ENCODE measurements at regions of chr3 and their contacts with region 1.

Region 1: GRCh38 chr3:34683851-34684250 is 885.4 kb downstream of the PDCD6IP start:
- DNase-seq: peak; percentile 15
- ATAC-seq: peak; percentile 71; the same call in 1 of the 2 replicates
- H3K4me3 ChIP-seq: no peak overlapping the region
- H3K27ac ChIP-seq: no peak overlapping the region
- H3K4me1 ChIP-seq: no peaks in the 10 kb centered on the region
- H3K27me3 ChIP-seq: no peaks in the 10 kb centered on the region
- CTCF ChIP-seq: peak; percentile 69

Region 2: GRCh38 chr3:33883538-33883950 is 800.3 kb before region 1 on chr3:
- CTCF ChIA-PET with region 1: interaction called, 15 read pairs
- POLR2A ChIA-PET with region 1: no interaction called
- in situ Hi-C with region 1: no loop called
- intact Hi-C with region 1: loop called (anchors 2 kb)
- DNase-seq: peak; percentile 17
- ATAC-seq: peak; percentile 36; the same call in 1 of the 2 replicates
- H3K4me3 ChIP-seq: peak overlapping the region in 1 of 2 experiments; percentile 47; a peak in 2 of 4 replicates
- H3K27ac ChIP-seq: peak overlapping the region; percentile 39; the same call in 1 of the 2 replicates
- H3K4me1 ChIP-seq: peaks cover 5% of the 10 kb centered on the region
- H3K27me3 ChIP-seq: no peaks in the 10 kb centered on the region
- CTCF ChIP-seq: peak; percentile 53; the same call in 1 of the 2 replicates

Region 3: DNA sequence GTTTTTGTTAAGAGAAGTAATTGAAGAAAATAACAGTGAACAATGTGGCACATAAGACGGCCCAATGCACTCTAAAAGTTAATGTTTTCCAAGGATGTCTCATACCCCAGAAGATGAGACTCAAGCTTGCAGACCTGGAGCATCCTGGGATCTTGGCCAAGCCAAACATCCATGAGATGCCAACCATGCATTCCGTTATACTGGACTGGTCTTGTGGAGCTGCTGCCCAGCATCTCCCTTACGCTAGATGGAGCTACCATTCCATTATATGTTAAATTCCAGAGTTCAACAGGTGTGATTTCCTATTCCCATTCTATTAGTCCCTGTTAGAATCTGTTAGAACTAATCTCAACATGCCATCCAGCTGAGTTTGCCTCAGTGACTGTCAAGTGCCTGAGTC is 703.6 kb before region 1 on chr3:
- CTCF ChIA-PET with region 1: interaction called, 4 read pairs
- POLR2A ChIA-PET with region 1: no interaction called
- in situ Hi-C with region 1: no loop called
- intact Hi-C with region 1: loop called (anchors 1 kb)
- DNase-seq: peak; percentile 50
- ATAC-seq: peak; percentile 91
- H3K4me3 ChIP-seq: no peak overlapping the region
- H3K27ac ChIP-seq: no peak overlapping the region
- H3K4me1 ChIP-seq: no peaks in the 10 kb centered on the region
- H3K27me3 ChIP-seq: no peaks in the 10 kb centered on the region
- CTCF ChIP-seq: peak; percentile 71

Region 4: GRCh38 chr3:34178415-34178814 is 505.4 kb before region 1 on chr3:
- CTCF ChIA-PET with region 1: no interaction called
- POLR2A ChIA-PET with region 1: no interaction called
- in situ Hi-C with region 1: no loop called
- intact Hi-C with region 1: no loop called
- DNase-seq: no peak
- ATAC-seq: no peak
- H3K4me3 ChIP-seq: no peak overlapping the region
- H3K27ac ChIP-seq: no peak overlapping the region
- H3K4me1 ChIP-seq: no peaks in the 10 kb centered on the region
- H3K27me3 ChIP-seq: no peaks in the 10 kb centered on the region
- CTCF ChIP-seq: no peak

Region 5: DNA sequence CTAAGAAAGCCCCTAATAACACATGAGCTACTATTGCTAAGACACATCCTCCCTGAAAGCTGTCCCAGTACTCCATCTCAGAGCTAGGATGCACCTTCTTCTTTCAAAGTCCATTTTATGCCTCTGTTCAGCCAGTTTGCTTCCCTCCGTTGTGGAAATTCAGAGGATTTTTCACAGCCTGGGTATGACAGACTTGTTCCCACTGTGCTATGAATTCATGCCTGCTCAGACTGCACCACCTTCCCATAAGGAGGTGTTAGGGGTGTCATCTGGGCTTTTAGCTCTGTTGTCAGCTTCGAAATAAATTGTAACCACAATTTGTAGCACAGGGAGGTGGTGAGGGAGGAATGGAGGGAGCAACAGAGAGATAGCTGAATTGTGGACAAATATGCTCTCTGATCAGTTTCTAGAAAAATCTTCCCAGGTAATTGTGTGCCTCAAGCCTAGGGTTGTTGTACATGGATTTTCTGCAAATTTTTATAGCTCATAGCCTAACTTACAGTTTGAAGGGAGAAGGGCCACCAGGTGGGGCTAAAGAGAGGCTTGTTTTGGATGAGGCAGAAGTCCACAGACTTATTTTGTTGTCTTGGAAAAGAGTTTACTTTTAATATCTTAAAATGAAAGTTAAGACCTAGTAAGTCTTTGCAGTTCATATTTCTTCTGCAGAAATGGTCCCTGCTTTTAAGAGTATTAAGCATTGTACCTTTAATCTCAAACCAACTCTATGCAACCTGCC is 423.4 kb before region 1 on chr3:
- CTCF ChIA-PET with region 1: interaction called, 6 read pairs
- POLR2A ChIA-PET with region 1: no interaction called
- in situ Hi-C with region 1: no loop called
- intact Hi-C with region 1: loop called (anchors 10 kb)
- DNase-seq: peak; percentile 4
- ATAC-seq: peak; percentile 70; the same call in 1 of the 2 replicates
- H3K4me3 ChIP-seq: no peak overlapping the region
- H3K27ac ChIP-seq: no peak overlapping the region
- H3K4me1 ChIP-seq: no peaks in the 10 kb centered on the region
- H3K27me3 ChIP-seq: no peaks in the 10 kb centered on the region
- CTCF ChIP-seq: peak; percentile 68

Region 6: DNA sequence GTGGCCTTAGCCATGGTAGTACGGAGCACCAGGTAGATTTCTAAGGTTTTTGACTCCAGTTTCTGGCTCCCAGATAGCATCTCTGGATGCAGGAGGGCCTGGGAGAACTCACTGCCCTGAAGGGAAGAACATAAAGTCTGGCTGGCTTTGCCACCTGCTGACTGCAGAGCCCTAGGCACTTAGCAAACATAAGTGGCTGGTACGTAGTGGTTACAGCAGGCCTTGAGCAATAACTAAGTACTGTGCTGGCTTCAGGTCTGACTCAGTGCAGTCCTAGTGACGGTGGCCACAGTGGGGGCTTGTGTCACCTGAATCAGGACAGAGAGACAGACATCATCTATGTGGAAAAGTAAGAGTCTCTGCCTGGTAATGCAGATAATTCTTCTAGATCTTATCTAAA is 14.4 kb before region 1 on chr3:
- CTCF ChIA-PET with region 1: no interaction called
- POLR2A ChIA-PET with region 1: no interaction called
- in situ Hi-C with region 1: no loop called
- intact Hi-C with region 1: no loop called
- DNase-seq: no peak
- ATAC-seq: no peak
- H3K4me3 ChIP-seq: no peak overlapping the region
- H3K27ac ChIP-seq: no peak overlapping the region
- H3K4me1 ChIP-seq: no peaks in the 10 kb centered on the region
- H3K27me3 ChIP-seq: no peaks in the 10 kb centered on the region
- CTCF ChIP-seq: no peak

Region 7: GRCh38 chr3:34895841-34896240 is 212.0 kb after region 1 on chr3:
- CTCF ChIA-PET with region 1: no interaction called
- POLR2A ChIA-PET with region 1: no interaction called
- in situ Hi-C with region 1: no loop called
- intact Hi-C with region 1: no loop called
- DNase-seq: no peak
- ATAC-seq: no peak
- H3K4me3 ChIP-seq: no peak overlapping the region
- H3K27ac ChIP-seq: no peak overlapping the region
- H3K4me1 ChIP-seq: no peaks in the 10 kb centered on the region
- H3K27me3 ChIP-seq: no peaks in the 10 kb centered on the region
- CTCF ChIP-seq: no peak